Activated CD4-positive, alpha-beta T cell treated with anti-CD3 and anti-CD28 coated beads, Interleukin-2, amount 10 ng/mL, durations not matched to agents 24 days and 14 days (primary cell): ENCODE measurements at regions of chr2 and their contacts with region 1.

Region 1: GRCh38 chr2:202299712-202300111 is 34.1 kb downstream of the NOP58 start:
- DNase-seq: no peak
- H3K4me3 Mint-ChIP-seq: peak overlapping the region; percentile 2
- H3K27ac Mint-ChIP-seq: peak overlapping the region; percentile 77
- H3K4me1 Mint-ChIP-seq: peaks cover 12% of the 10 kb centered on the region
- H3K27me3 Mint-ChIP-seq: no peaks in the 10 kb centered on the region

Region 2: GRCh38 chr2:202201220-202202174 is 98.2 kb before region 1 on chr2:
- intact Hi-C with region 1: no loop called
- DNase-seq: no peak
- H3K4me3 Mint-ChIP-seq: no peak overlapping the region
- H3K27ac Mint-ChIP-seq: no peak overlapping the region
- H3K4me1 Mint-ChIP-seq: no peaks in the 10 kb centered on the region
- H3K27me3 Mint-ChIP-seq: peaks cover 7% of the 10 kb centered on the region

Region 3: GRCh38 chr2:202278944-202279343 is 20.8 kb before region 1 on chr2:
- intact Hi-C with region 1: loop called (anchors 1 kb)
- DNase-seq: no peak
- H3K4me3 Mint-ChIP-seq: peak overlapping the region; percentile 21
- H3K27ac Mint-ChIP-seq: peak overlapping the region; percentile 62
- H3K4me1 Mint-ChIP-seq: peaks cover 35% of the 10 kb centered on the region
- H3K27me3 Mint-ChIP-seq: no peaks in the 10 kb centered on the region

Region 4: DNA sequence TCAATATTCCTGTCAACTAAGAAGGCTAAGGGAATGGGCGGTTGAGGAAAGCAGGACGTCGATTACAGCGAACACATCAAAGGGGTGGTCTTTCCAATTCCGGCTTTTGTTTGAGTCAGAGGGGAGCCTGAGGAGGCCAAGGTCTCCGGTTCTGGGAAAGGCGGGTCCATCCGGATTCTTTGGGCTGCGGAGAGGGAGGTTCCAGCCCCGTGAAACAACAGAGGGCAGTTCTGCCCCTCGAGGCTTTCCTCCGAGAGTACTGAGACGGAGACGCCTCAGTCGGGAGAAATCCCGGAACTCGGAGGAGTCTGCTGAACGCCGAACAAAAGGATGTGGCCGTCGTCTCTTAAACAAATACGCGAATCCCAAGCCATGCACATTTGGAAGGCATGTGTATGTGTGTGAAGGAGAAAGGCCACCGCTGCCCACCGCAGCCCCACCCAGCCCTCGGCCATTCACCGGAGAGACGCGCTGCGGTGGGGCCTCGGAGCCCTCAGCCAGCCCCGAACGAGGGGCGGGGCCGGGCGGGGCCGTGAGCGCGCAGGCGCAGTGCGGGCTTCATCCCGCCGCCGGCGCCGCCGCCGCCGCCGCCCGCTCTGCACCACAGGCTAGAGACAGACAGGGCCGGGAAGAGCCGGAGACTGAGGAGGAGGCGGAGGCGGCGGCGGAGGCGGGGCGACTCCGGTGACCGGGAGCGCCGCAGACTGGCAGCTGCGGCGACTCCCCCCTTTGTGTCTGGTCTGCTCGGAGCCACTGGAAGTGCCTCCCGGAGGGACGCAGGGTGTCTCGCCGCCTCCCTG is 76.1 kb after region 1 on chr2 and contains the start of gene BMPR2:
- intact Hi-C with region 1: loop called (anchors 5 kb)
- DNase-seq: peak; percentile 96
- H3K4me3 Mint-ChIP-seq: peak within 1 kb of the TSS; percentile 95
- H3K27ac Mint-ChIP-seq: peak within 1 kb of the TSS; percentile 85
- H3K4me1 Mint-ChIP-seq: peaks cover 25% of the 10 kb centered on the region
- H3K27me3 Mint-ChIP-seq: peaks cover 10% of the 10 kb centered on the region
- total RNA-seq, gene BMPR2: 5.4 and 6.3 TPM in 2 replicates